ENCODE measurements at regions of chr1 and their contacts with region 1.

Region 1: DNA sequence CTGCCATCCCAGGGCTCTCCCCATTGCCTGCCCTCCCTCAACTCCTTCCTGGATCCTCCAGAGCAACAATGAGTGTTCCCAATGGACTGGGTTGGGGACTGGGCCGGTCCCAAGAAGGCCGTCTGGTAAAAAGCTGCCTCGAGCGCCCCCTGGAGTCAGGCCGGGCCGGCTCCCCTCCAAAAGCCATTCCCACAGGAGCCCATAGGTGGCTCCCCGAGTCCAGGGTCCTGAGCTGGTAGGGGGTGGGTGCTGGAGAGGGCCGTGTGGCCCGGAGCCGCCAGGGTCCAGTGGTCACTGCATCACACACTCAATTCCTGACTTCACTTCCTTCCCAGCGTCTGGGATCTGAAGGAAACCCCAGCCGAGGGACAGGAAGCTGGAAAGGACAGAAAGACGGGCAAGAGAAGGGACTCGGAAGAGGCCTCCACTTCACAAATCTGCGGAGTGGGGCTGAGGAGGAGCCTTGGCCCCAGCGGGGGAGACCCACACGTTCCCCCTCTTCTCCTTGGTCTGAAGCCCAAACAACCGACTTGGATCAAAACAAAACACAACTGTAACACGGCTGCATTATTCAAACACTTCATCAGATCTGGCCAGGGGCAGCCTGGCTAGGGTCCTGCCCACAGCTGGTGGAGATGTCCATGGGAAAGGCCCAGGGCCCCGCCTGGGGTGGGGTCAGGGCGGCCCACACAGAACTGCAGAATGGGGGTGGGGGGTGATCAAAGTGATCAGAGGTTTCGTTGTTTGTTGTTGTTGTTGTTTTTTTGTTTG is 10.9 kb upstream of the ALDH4A1 start:
- DNase-seq: no peak
- H3K4me3 ChIP-seq: no peak overlapping the region
- H3K27me3 ChIP-seq: no peaks in the 10 kb centered on the region
- CTCF ChIP-seq: peak; percentile 100

Region 2: DNA sequence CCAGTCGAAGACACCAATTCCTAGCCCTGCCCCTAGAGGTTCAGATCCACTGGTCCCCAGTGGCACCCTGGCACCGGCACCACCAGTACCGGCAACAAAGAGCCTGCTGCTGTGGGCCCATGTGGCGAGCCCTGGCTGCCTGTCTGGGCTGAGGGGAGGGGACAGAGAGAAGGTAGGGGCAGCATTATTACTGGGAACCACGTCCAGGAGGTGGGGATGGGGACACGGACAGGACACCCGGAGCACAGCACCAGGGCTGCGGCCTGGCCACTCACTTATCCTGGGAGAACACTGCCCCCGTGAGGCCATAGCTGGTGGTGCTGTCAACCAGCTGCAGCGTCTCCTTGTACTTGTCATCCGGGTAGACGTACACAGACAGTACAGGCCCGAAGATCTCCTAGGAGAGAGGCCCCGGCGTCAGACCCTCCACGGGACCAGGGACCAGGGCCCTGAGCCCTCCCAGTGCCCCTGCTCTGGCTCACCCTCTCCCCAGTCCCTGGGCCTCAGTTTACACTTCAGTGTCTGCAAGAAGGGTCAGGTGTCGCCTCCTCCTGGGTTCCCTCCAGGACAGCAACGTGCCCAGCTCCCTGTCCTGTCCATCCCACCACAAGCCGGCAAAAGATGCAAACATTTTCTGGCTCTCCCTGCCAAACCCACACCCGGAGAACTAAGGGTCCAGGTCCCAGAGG is 38.0 kb before region 1 on chr1:
- CTCF ChIA-PET with region 1: no interaction called
- POLR2A ChIA-PET with region 1: no interaction called
- DNase-seq: peak; percentile 21
- H3K4me3 ChIP-seq: no peak overlapping the region
- H3K27me3 ChIP-seq: no peaks in the 10 kb centered on the region
- CTCF ChIP-seq: peak; percentile 90

Region 3: DNA sequence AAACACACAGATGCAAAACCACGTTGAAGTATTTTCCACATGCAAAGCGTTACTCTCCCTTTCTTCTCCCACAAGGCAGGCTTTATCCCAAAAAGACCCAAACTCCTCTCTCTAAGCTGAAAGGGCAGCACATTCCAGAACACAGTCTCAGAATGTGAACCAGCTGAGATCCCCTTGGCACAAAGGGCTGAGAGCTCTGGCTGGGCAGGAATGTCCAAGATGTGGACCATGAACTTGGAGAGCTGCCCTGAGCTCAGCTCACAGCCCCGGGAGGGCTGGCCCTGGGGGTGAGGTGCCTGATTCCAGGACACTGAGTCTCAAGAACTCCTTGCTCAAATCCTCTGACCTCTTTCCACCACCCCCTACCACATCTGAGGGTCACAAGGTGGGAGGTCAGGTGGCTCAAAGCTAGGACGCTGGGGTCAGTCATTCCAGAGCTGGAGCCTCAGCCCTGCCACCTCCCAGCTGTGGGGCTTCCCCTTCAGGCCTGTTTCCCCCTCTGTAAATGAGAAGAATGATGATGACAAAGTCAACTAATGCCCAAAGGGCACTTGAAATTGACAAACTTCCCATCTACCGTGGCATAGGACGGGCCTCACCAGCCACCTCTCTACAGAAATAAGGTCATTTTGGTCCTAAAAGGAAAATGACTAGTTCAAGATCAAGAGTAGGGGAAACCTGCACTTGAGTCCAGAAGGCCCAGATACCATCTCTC is 22.4 kb before region 1 on chr1:
- CTCF ChIA-PET with region 1: interaction called, 34 read pairs
- POLR2A ChIA-PET with region 1: no interaction called
- DNase-seq: peak; percentile 14
- H3K4me3 ChIP-seq: no peak overlapping the region
- H3K27me3 ChIP-seq: no peaks in the 10 kb centered on the region
- CTCF ChIP-seq: no peak

Region 4: GRCh38 chr1:18945401-18945849 is 32.2 kb after region 1 on chr1:
- CTCF ChIA-PET with region 1: interaction called, 57 read pairs
- POLR2A ChIA-PET with region 1: no interaction called
- DNase-seq: no peak
- H3K4me3 ChIP-seq: no peak overlapping the region
- H3K27me3 ChIP-seq: no peaks in the 10 kb centered on the region
- CTCF ChIP-seq: no peak

Region 5: GRCh38 chr1:18972531-18972930 is 59.3 kb after region 1 on chr1:
- CTCF ChIA-PET with region 1: interaction called, 33 read pairs
- POLR2A ChIA-PET with region 1: no interaction called
- DNase-seq: no peak
- H3K4me3 ChIP-seq: no peak overlapping the region
- H3K27me3 ChIP-seq: no peaks in the 10 kb centered on the region
- CTCF ChIP-seq: 0 out of 2 replicates have a peak, but pooled peaks have one; percentile 25

Region 6: GRCh38 chr1:19081218-19081893 is 168.1 kb after region 1 on chr1:
- CTCF ChIA-PET with region 1: interaction called, 33 read pairs
- POLR2A ChIA-PET with region 1: no interaction called
- DNase-seq: no peak
- H3K4me3 ChIP-seq: no peak overlapping the region
- H3K27me3 ChIP-seq: no peaks in the 10 kb centered on the region
- CTCF ChIP-seq: no peak

Measured in BJ (cell line).